GM13976 (cell line): ENCODE measurements at regions of chr4 and their contacts with region 1.

Region 1: DNA sequence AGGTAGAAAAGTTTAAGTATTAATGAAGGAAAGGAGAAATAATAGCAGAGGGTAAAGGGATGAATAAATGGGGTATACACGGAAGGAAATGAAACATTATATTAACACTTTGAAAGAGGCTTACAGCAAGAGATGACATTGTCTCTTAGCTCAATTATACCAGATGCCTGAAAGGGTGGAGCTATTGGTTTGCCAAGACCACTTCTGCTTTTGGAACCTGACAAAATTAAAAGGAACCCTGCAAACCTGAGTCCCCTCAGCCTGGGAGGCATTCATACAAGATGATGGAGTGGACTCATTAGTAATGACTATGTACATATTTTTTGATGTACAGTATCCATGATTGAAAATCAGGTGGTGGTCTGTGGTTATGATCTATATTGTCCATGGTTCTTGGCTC is 45.1 kb upstream of the HPF1 start:
- DNase-seq: no peak
- CTCF ChIP-seq: no peak

Region 2: GRCh38 chr4:170047771-170048354 is 245.0 kb after region 1 on chr4:
- in situ Hi-C with region 1: loop called (anchors 10 kb)
- DNase-seq: peak; percentile 43
- CTCF ChIP-seq: peak; percentile 58